ENCODE measurements at regions of chr2 and their contacts with region 1.

Region 1: DNA sequence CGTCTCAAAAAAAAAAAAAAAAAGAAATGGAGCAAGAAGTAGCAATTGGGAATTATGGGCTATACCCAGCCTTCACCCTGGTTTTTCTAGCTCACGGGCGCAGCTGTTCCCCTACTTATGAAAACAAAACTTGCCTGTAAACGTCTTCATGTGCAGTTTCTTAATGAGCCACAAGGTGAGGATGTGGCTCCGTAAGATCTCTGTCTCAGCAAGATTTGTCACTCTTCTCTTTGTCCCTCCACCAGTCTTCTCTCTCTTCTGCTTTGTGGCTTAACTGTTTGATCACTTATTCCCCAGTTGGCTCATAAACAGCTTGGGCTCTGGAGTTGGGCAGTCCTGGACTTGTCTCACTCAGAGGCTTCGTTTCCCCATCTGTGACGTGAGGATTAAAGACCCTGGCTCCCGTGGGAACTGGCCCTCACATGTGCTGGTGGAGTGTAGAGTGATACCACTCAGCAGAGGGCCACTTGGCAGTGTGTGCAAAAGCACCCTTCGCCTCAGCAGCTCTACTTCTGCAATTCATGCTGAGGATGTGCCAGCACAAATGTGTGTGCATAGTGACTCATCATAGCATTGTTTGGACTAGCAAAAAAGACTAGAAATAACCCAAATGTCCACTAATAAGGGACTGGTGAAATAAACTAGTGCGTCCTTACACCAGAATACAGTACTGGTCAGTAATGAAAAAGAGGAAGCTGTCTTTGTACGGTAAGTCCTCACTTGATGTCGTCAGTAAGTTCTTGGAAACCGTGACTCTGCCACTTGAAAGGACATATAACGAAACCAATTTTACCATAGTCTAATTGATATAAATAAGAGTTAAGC is 8.7 kb downstream of the CEP68 start:
- DNase-seq: peak; percentile 50 to 78
- ATAC-seq: peak; percentile 60 to 73
- H3K4me3 ChIP-seq: peak overlapping the region in 3 of 4 donors; percentile 3 to 34 (median 23)
- H3K27ac ChIP-seq: peak overlapping the region; percentile 90 to 96 (median 92)
- H3K4me1 ChIP-seq: peaks cover 93 to 95% of the 10 kb centered on the region in 2 donors
- H3K27me3 ChIP-seq: no peaks in the 10 kb centered on the region
- CTCF ChIP-seq: peak; percentile 76 to 90 (median 83)
- POLR2A ChIP-seq: peak; percentile 10 to 56

Region 2: GRCh38 chr2:65186872-65187851 is 122.2 kb after region 1 on chr2:
- in situ Hi-C with region 1: loop called in 2 of 4 experiments (anchors 5 kb)
- intact Hi-C with region 1: loop called (anchors 1 kb)
- DNase-seq: peak; percentile 53 to 77
- ATAC-seq: peak; percentile 98 to 99
- H3K4me3 ChIP-seq: no peak overlapping the region
- H3K27ac ChIP-seq: no peak overlapping the region
- H3K4me1 ChIP-seq: peaks cover 3 to 7% of the 10 kb centered on the region in 2 donors
- H3K27me3 ChIP-seq: no peaks in the 10 kb centered on the region
- CTCF ChIP-seq: peak; percentile 41 to 85 (median 76)
- POLR2A ChIP-seq: no peak

Region 3: GRCh38 chr2:65204461-65205210 is 139.7 kb after region 1 on chr2:
- in situ Hi-C with region 1: no loop called
- intact Hi-C with region 1: no loop called
- DNase-seq: no peak
- ATAC-seq: no peak
- H3K4me3 ChIP-seq: no peak overlapping the region
- H3K27ac ChIP-seq: no peak overlapping the region
- H3K4me1 ChIP-seq: no peaks in the 10 kb centered on the region
- H3K27me3 ChIP-seq: no peaks in the 10 kb centered on the region
- CTCF ChIP-seq: no peak
- POLR2A ChIP-seq: no peak

Region 4: DNA sequence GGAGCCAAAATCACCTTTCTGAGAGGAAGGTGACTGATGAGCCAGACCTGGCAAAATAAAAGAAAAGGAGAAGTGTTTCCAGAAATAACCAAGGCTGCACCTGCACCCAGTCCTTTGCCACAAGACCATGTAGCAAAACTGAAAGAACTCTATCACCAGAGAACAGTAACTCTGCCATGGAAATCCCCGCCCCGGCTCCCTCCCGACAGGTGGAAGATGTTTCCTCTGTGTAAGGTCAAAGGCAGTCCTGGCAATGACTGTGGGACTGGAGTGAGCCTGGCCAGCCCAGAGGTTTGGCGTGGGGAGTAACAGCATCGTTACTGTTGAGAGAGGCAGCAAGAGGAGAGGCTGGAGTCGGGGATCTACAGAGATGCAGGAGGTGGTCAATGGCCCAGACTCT is 325.2 kb after region 1 on chr2:
- in situ Hi-C with region 1: no loop called
- intact Hi-C with region 1: no loop called
- DNase-seq: no peak
- ATAC-seq: no peak
- H3K4me3 ChIP-seq: no peak overlapping the region
- H3K27ac ChIP-seq: no peak overlapping the region
- H3K4me1 ChIP-seq: peaks cover 15 to 17% of the 10 kb centered on the region in 2 donors
- H3K27me3 ChIP-seq: no peaks in the 10 kb centered on the region
- CTCF ChIP-seq: no peak
- POLR2A ChIP-seq: no peak